CD4-positive, alpha-beta memory T cell (primary cell): ENCODE measurements at regions of chr12 and their contacts with region 1.

Region 1: GRCh38 chr12:6570264-6570887 is 2.3 kb upstream of the NOP2 start:
- DNase-seq: peak in 3 of 5 donors; percentile 20 to 29 (median 25)
- H3K4me3 ChIP-seq: no peak overlapping the region
- H3K4me3 Mint-ChIP-seq: peak overlapping the region in 5 of 8 donors; percentile 10 to 100 (median 61)
- H3K27ac ChIP-seq: no peak overlapping the region
- H3K27ac Mint-ChIP-seq: peak overlapping the region; percentile 67 to 100 (median 75)
- H3K4me1 ChIP-seq: peaks cover 42% of the 10 kb centered on the region
- H3K4me1 Mint-ChIP-seq: peaks cover 17 to 51% (median 33%) of the 10 kb centered on the region in 4 donors
- H3K27me3 ChIP-seq: no peaks in the 10 kb centered on the region
- H3K27me3 Mint-ChIP-seq: no peaks in the 10 kb centered on the region

Region 2: GRCh38 chr12:6554168-6555017 is 16.0 kb before region 1 on chr12:
- CTCF ChIA-PET with region 1: interaction called, 61 read pairs
- POLR2A ChIA-PET with region 1: interaction called, 40 read pairs
- intact Hi-C with region 1: loop called (anchors 1 kb)
- DNase-seq: peak; percentile 60 to 79 (median 63)
- H3K4me3 ChIP-seq: peak overlapping the region; percentile 71 to 73
- H3K4me3 Mint-ChIP-seq: peak overlapping the region; percentile 81 to 96 (median 88)
- H3K27ac ChIP-seq: peak overlapping the region; percentile 48
- H3K27ac Mint-ChIP-seq: peak overlapping the region; percentile 14 to 89 (median 70)
- H3K4me1 ChIP-seq: peaks cover 57% of the 10 kb centered on the region
- H3K4me1 Mint-ChIP-seq: peaks cover 28 to 64% (median 45%) of the 10 kb centered on the region in 4 donors
- H3K27me3 ChIP-seq: no peaks in the 10 kb centered on the region
- H3K27me3 Mint-ChIP-seq: no peaks in the 10 kb centered on the region

Region 3: DNA sequence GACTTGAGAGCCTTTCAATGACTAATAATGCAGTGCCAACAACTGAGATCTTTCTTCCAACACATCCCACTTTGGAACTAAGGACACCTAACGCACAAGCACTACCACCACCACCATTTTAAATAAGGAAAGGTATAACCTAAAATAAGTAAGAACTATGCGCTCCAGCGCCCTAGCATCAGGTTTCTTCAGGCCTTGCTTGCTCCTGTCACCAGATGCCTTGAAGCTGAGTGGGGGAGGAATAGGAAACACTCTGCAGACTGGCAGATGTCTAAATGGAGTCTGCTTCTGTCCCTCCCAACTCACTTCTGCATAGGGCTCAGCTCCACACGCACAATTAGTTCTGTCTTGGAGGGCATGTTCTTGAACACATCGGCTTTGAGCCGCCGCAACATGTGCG is 21.7 kb after region 1 on chr12:
- CTCF ChIA-PET with region 1: interaction called, 11 read pairs
- POLR2A ChIA-PET with region 1: interaction called, 4 read pairs
- intact Hi-C with region 1: no loop called
- DNase-seq: no peak
- H3K4me3 ChIP-seq: no peak overlapping the region
- H3K4me3 Mint-ChIP-seq: no peak overlapping the region
- H3K27ac ChIP-seq: no peak overlapping the region
- H3K27ac Mint-ChIP-seq: peak overlapping the region in 1 of 7 donors; percentile 77
- H3K4me1 ChIP-seq: no peaks in the 10 kb centered on the region
- H3K4me1 Mint-ChIP-seq: peaks cover 5 to 16% (median 9%) of the 10 kb centered on the region in 4 donors
- H3K27me3 ChIP-seq: no peaks in the 10 kb centered on the region
- H3K27me3 Mint-ChIP-seq: no peaks in the 10 kb centered on the region